ENCODE measurements at regions of chr19 and their contacts with region 1.

Region 1: DNA sequence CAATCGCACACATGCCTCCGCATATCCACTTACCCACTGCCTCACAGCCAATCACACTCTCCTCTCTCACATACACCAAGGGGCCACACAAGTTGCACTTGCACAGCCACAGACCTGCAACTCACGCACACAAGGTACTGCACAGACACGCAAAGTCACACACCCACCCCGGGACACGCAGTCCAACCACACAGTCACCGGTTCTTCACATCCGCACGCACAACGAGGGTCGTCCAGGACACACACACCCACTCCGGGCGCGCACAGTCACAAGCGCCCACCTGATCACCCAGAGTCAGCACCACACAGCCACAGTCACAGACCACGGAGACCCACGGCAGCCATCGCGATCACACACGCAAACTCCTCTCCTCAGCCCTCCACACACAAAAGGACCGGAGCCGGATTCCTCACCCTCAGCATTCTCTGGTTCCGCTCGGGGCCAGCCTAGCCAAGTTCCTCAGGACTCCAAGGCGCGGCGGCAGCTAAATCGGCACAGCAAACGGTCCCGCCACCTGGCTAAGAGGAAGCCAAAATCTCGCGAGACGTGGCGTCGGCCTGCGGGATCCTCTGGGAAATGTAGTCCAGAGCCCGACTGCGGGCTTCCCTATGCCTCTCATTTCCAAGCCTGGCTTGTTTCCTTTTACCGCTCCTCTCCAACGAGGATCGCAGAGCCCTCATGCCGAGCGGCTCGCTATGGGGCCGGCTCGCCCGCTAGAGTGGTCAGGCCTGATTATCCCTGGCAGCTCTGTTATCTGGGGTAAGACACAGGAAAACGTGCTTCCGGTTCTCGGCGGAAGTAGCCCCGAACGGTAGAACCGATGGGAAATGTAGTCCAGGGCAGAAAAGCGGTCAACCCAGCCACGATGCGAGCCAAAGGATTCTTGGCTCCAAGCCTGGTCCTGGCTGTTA is at the start of gene ZNF850:
- DNase-seq: peak; percentile 89 to 93 (median 92)
- H3K4me3 ChIP-seq: peak within 1 kb of the TSS; percentile 71 to 97 (median 90)
- H3K4me3 Mint-ChIP-seq: peak within 1 kb of the TSS; percentile 93 to 97
- H3K27ac ChIP-seq: peak within 1 kb of the TSS; percentile 70 to 80
- H3K27ac Mint-ChIP-seq: peak within 1 kb of the TSS; percentile 68 to 94 (median 91)
- H3K4me1 ChIP-seq: peaks cover 23 to 27% of the 10 kb centered on the region in 2 donors
- H3K4me1 Mint-ChIP-seq: peaks cover 22% of the 10 kb centered on the region
- H3K27me3 ChIP-seq: no peaks in the 10 kb centered on the region
- H3K27me3 Mint-ChIP-seq: peaks cover 0 to 6% (median 0%) of the 10 kb centered on the region in 3 donors
- CTCF ChIP-seq: no peak
- polyA plus RNA-seq, gene ZNF850: 0.02 to 0.15 (median 0.08) TPM

Region 2: GRCh38 chr19:36214386-36215275 is 557.9 kb before region 1 on chr19 and contains the starts of genes ZNF146 and ZNF565:
- intact Hi-C with region 1: loop called in 1 of 2 experiments (anchors 5 kb)
- DNase-seq: peak; percentile 96 to 99 (median 96)
- H3K4me3 ChIP-seq: peak within 1 kb of the TSS; percentile 61 to 92 (median 69)
- H3K4me3 Mint-ChIP-seq: no peak within 1 kb of the TSS
- H3K27ac ChIP-seq: peak within 1 kb of the TSS; percentile 72 to 95
- H3K27ac Mint-ChIP-seq: no peak within 1 kb of the TSS
- H3K4me1 ChIP-seq: peaks cover 11 to 18% of the 10 kb centered on the region in 2 donors
- H3K4me1 Mint-ChIP-seq: peaks cover 5% of the 10 kb centered on the region
- H3K27me3 ChIP-seq: no peaks in the 10 kb centered on the region
- H3K27me3 Mint-ChIP-seq: no peaks in the 10 kb centered on the region
- CTCF ChIP-seq: no peak
- polyA plus RNA-seq, gene ZNF146: 12.2 to 26.5 (median 15.8) TPM
- polyA plus RNA-seq, gene ZNF565: 1.5 to 3.5 (median 2.1) TPM

Region 3: GRCh38 chr19:36528194-36528920 is 244.2 kb before region 1 on chr19 and contains the start of gene ZNF260:
- intact Hi-C with region 1: loop called in 1 of 2 experiments (anchors 5 kb)
- DNase-seq: peak; percentile 90 to 92 (median 91)
- H3K4me3 ChIP-seq: peak within 1 kb of the TSS; percentile 63 to 84 (median 74)
- H3K4me3 Mint-ChIP-seq: peak within 1 kb of the TSS; percentile 98 to 100
- H3K27ac ChIP-seq: peak within 1 kb of the TSS; percentile 70 to 77
- H3K27ac Mint-ChIP-seq: peak within 1 kb of the TSS; percentile 87 to 97 (median 95)
- H3K4me1 ChIP-seq: peaks cover 14 to 18% of the 10 kb centered on the region in 2 donors
- H3K4me1 Mint-ChIP-seq: peaks cover 18% of the 10 kb centered on the region
- H3K27me3 ChIP-seq: no peaks in the 10 kb centered on the region
- H3K27me3 Mint-ChIP-seq: peaks cover 0 to 5% (median 0%) of the 10 kb centered on the region in 3 donors
- CTCF ChIP-seq: no peak
- polyA plus RNA-seq, gene ZNF260: 0.88 to 2.1 (median 1.2) TPM

Region 4: GRCh38 chr19:36665832-36666231 is 106.7 kb before region 1 on chr19:
- intact Hi-C with region 1: loop called in 1 of 2 experiments (anchors 5 kb)
- DNase-seq: no peak
- H3K4me3 ChIP-seq: peak overlapping the region; percentile 58 to 85 (median 79)
- H3K4me3 Mint-ChIP-seq: peak overlapping the region; percentile 97 to 100
- H3K27ac ChIP-seq: no peak overlapping the region
- H3K27ac Mint-ChIP-seq: peak overlapping the region in 1 of 7 donors; percentile 16
- H3K4me1 ChIP-seq: peaks cover 8 to 14% of the 10 kb centered on the region in 2 donors
- H3K4me1 Mint-ChIP-seq: peaks cover 13% of the 10 kb centered on the region
- H3K27me3 ChIP-seq: no peaks in the 10 kb centered on the region
- H3K27me3 Mint-ChIP-seq: peaks cover 2 to 5% (median 3%) of the 10 kb centered on the region in 3 donors
- CTCF ChIP-seq: no peak

Region 5: GRCh38 chr19:36750066-36750691 is 22.4 kb before region 1 on chr19:
- intact Hi-C with region 1: no loop called
- DNase-seq: no peak
- H3K4me3 ChIP-seq: peak overlapping the region in 1 of 3 experiments; percentile 45
- H3K4me3 Mint-ChIP-seq: no peak overlapping the region
- H3K27ac ChIP-seq: no peak overlapping the region
- H3K27ac Mint-ChIP-seq: no peak overlapping the region
- H3K4me1 ChIP-seq: no peaks in the 10 kb centered on the region
- H3K4me1 Mint-ChIP-seq: no peaks in the 10 kb centered on the region
- H3K27me3 ChIP-seq: no peaks in the 10 kb centered on the region
- H3K27me3 Mint-ChIP-seq: no peaks in the 10 kb centered on the region
- CTCF ChIP-seq: no peak

Region 6: GRCh38 chr19:36796076-36796992 is 23.8 kb after region 1 on chr19:
- intact Hi-C with region 1: loop called in 1 of 2 experiments (anchors 2 kb)
- DNase-seq: no peak
- H3K4me3 ChIP-seq: peak overlapping the region; percentile 60 to 97 (median 61)
- H3K4me3 Mint-ChIP-seq: peak overlapping the region; percentile 90 to 94
- H3K27ac ChIP-seq: peak overlapping the region; percentile 59 to 73
- H3K27ac Mint-ChIP-seq: peak overlapping the region in 3 of 7 donors; percentile 88 to 96 (median 92)
- H3K4me1 ChIP-seq: peaks cover 9 to 16% of the 10 kb centered on the region in 2 donors
- H3K4me1 Mint-ChIP-seq: peaks cover 8% of the 10 kb centered on the region
- H3K27me3 ChIP-seq: no peaks in the 10 kb centered on the region
- H3K27me3 Mint-ChIP-seq: peaks cover 2 to 5% (median 4%) of the 10 kb centered on the region in 3 donors
- CTCF ChIP-seq: no peak

Region 7: GRCh38 chr19:36915992-36916830 is 143.6 kb after region 1 on chr19 and contains the starts of genes ZNF568 and ZNF829:
- intact Hi-C with region 1: loop called in 1 of 2 experiments (anchors 2 kb)
- DNase-seq: peak; percentile 62 to 72 (median 69)
- H3K4me3 ChIP-seq: peak within 1 kb of the TSS; percentile 57 to 99 (median 78)
- H3K4me3 Mint-ChIP-seq: peak within 1 kb of the TSS; percentile 96
- H3K27ac ChIP-seq: peak within 1 kb of the TSS; percentile 53 to 84
- H3K27ac Mint-ChIP-seq: peak within 1 kb of the TSS; percentile 79 to 96 (median 90)
- H3K4me1 ChIP-seq: peaks cover 6 to 17% of the 10 kb centered on the region in 2 donors
- H3K4me1 Mint-ChIP-seq: peaks cover 18% of the 10 kb centered on the region
- H3K27me3 ChIP-seq: no peaks in the 10 kb centered on the region
- H3K27me3 Mint-ChIP-seq: peaks cover 0 to 4% (median 2%) of the 10 kb centered on the region in 3 donors
- CTCF ChIP-seq: peak; percentile 66
- polyA plus RNA-seq, gene ZNF568: 0.38 to 0.96 (median 0.79) TPM
- polyA plus RNA-seq, gene ZNF829: 0.05 to 0.14 (median 0.08) TPM

Region 8: DNA sequence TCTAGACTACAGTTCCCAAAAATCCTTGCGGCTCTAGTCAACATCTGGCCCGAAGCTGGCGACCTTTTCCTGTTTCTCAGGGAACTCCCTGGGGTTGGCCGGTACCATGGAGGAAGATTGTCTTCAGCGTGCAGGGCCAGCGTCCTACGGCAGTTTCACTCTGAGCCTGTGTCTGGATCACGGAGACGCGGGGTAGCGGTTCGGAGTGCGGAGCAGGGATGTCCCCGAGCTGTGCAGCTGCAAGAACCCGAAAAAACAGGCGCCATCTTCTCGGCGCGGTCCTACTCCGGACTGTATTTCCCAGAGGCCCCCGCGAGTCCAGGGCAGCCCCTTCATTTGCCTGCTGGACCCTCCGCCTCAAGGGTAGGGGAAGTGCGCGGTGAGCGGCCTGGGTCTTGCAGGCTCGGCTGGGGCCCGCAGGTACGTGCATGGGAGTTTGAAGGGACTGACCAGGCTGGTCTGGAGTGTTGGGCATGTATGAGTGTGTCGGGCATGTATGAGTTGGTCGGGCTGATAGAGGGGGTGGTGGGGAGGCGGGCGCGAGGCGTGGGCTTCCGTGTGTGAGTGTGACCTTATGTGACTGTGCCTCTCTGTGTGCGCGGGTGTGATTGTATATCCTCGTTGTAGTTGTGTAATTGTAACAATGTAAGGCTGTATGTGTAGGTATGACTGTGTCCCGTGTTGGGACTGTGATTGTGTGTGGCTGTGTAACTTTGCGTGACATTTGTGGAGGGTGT is 445.5 kb after region 1 on chr19 and contains the start of gene ZNF383:
- intact Hi-C with region 1: loop called (anchors 10 kb)
- DNase-seq: peak; percentile 70 to 75 (median 72)
- H3K4me3 ChIP-seq: peak within 1 kb of the TSS; percentile 92 to 100 (median 94)
- H3K4me3 Mint-ChIP-seq: peak within 1 kb of the TSS; percentile 99
- H3K27ac ChIP-seq: peak within 1 kb of the TSS; percentile 71 to 92
- H3K27ac Mint-ChIP-seq: peak within 1 kb of the TSS; percentile 92 to 99 (median 94)
- H3K4me1 ChIP-seq: peaks cover 10 to 16% of the 10 kb centered on the region in 2 donors
- H3K4me1 Mint-ChIP-seq: peaks cover 16% of the 10 kb centered on the region
- H3K27me3 ChIP-seq: no peaks in the 10 kb centered on the region
- H3K27me3 Mint-ChIP-seq: peaks cover 0 to 4% (median 2%) of the 10 kb centered on the region in 3 donors
- CTCF ChIP-seq: no peak
- polyA plus RNA-seq, gene ZNF383: 2.8 to 4.2 (median 3.5) TPM